ENCODE measurements at regions of chr17 and their contacts with region 1.

Region 1: GRCh38 chr17:2179615-2180295 is 123.8 kb downstream of the SMG6 start:
- DNase-seq: peak; percentile 60 to 97
- ATAC-seq: peak; percentile 64 to 80 (median 77)
- H3K4me3 ChIP-seq: no peak overlapping the region
- H3K27ac ChIP-seq: peak overlapping the region; percentile 79 to 96 (median 88)
- H3K4me1 ChIP-seq: peaks cover 63 to 86% (median 82%) of the 10 kb centered on the region in 9 donors
- H3K27me3 ChIP-seq: no peaks in the 10 kb centered on the region
- CTCF ChIP-seq: no peak

Region 2: GRCh38 chr17:2064980-2065785 is 114.6 kb before region 1 on chr17:
- intact Hi-C with region 1: loop called in 5 of 10 experiments (anchors 2 to 10 kb)
- DNase-seq: peak in 1 of 2 donors; percentile 71
- ATAC-seq: peak in 6 of 8 donors; percentile 6 to 14 (median 8)
- H3K4me3 ChIP-seq: no peak overlapping the region
- H3K27ac ChIP-seq: peak overlapping the region; percentile 54 to 97 (median 93)
- H3K4me1 ChIP-seq: peaks cover 35 to 98% (median 87%) of the 10 kb centered on the region in 9 donors
- H3K27me3 ChIP-seq: no peaks in the 10 kb centered on the region
- CTCF ChIP-seq: peak in 6 of 9 donors; percentile 33 to 59 (median 48)

Region 3: DNA sequence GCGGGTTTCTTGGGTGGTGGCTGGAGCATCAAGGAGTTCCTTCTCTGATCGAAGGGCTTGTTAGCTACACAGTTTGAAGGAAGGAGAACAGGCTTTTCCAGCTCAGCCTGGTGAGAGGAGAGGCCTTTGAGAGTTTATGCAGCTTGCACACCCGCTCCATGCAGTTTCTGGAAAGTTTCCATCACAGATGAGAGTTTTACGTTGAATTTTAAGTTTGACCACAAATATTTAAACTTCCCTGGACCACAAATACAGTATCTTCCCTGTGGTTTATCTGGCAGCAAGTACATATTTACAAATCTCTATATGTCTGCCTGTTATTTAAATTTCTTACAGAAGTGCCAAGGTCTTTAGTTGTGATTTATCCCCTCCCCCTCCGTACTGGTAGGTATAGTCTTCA is 68.0 kb before region 1 on chr17:
- intact Hi-C with region 1: loop called in 1 of 10 experiments (anchors 5 kb)
- DNase-seq: no peak
- ATAC-seq: no peak
- H3K4me3 ChIP-seq: no peak overlapping the region
- H3K27ac ChIP-seq: no peak overlapping the region
- H3K4me1 ChIP-seq: peaks cover 7 to 21% (median 15%) of the 10 kb centered on the region in 9 donors
- H3K27me3 ChIP-seq: no peaks in the 10 kb centered on the region
- CTCF ChIP-seq: no peak

Region 4: GRCh38 chr17:2137342-2138098 is 42.2 kb before region 1 on chr17:
- intact Hi-C with region 1: no loop called
- DNase-seq: no peak
- ATAC-seq: peak in 1 of 8 donors; percentile 48
- H3K4me3 ChIP-seq: no peak overlapping the region
- H3K27ac ChIP-seq: peak overlapping the region in 3 of 10 donors; percentile 33 to 65 (median 42)
- H3K4me1 ChIP-seq: peaks cover 8 to 31% (median 17%) of the 10 kb centered on the region in 9 donors
- H3K27me3 ChIP-seq: no peaks in the 10 kb centered on the region
- CTCF ChIP-seq: no peak

Region 5: GRCh38 chr17:2215616-2216364 is 36.0 kb after region 1 on chr17:
- intact Hi-C with region 1: loop called in 6 of 10 experiments (anchors 1 to 5 kb)
- DNase-seq: peak; percentile 72 to 81
- ATAC-seq: peak; percentile 73 to 84 (median 81)
- H3K4me3 ChIP-seq: peak overlapping the region in 9 of 10 donors; percentile 10 to 48 (median 38)
- H3K27ac ChIP-seq: peak overlapping the region; percentile 82 to 97 (median 90)
- H3K4me1 ChIP-seq: peaks cover 18 to 70% (median 52%) of the 10 kb centered on the region in 9 donors
- H3K27me3 ChIP-seq: no peaks in the 10 kb centered on the region
- CTCF ChIP-seq: peak in 2 of 9 donors; percentile 6 to 18

Region 6: DNA sequence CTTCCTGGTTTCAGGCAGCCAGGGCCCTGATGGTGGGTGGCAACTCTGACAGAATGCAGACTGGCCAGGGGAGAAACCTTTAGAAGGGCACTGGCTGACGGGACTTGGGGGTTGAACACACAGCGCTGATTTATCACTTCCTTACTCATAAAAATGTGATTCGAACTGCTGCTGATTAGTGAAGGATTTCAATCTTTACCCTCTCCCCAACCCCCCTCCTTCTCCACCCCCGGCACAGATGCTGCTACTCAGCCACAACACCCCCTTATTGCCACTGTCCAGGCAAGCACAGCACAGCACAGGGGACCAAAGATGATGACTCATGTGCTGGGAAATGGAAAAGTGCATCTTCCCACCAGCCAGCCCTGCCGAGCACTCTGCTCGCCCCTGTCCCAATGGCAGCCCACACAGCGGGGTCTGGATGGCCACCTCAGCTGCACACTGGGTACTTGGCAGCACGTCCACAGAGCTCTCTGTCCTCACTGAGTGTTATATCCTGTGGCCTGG is 53.7 kb after region 1 on chr17:
- intact Hi-C with region 1: loop called in 5 of 10 experiments (anchors 2 to 5 kb)
- DNase-seq: peak; percentile 22 to 33
- ATAC-seq: peak in 5 of 8 donors; percentile 27 to 63 (median 35)
- H3K4me3 ChIP-seq: no peak overlapping the region
- H3K27ac ChIP-seq: peak overlapping the region in 9 of 10 donors; percentile 34 to 86 (median 70)
- H3K4me1 ChIP-seq: peaks cover 13 to 89% (median 68%) of the 10 kb centered on the region in 9 donors
- H3K27me3 ChIP-seq: no peaks in the 10 kb centered on the region
- CTCF ChIP-seq: no peak